ENCODE measurements at regions of chr3 and their contacts with region 1.

Region 1: DNA sequence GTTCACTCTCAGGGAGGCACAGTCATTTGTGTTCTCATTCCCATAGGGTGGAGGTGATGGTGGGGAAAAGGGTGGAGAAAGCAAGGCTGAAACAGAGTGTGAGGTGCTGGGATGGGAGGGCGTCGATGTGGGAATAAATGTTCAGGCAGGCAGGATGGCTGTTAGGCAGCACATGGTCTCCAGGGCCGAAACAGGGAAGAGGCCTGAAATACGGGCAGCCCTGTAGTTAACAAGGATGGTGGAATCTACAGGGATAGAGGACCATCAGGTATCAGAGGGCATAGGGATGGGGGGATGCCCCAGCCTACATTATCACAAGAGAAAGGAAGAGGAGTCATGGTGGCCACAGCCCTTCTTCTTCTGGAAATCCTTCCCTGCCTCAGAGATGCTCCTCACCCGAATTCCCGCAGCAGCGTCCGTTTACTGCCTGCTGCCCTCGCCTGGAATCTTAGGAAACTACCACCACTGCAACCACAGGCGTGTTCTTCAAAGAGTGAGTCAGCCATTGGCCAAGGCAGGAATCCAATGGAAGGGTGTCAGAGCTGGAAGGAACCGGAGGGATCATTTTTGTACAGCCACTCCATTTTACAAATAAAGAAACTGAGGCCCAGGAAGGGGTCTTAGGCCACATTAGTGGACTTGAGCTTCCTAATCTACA is 49.7 kb upstream of the POMGNT2 start:
- DNase-seq: peak; percentile 75
- ATAC-seq: peak; percentile 81

Region 2: DNA sequence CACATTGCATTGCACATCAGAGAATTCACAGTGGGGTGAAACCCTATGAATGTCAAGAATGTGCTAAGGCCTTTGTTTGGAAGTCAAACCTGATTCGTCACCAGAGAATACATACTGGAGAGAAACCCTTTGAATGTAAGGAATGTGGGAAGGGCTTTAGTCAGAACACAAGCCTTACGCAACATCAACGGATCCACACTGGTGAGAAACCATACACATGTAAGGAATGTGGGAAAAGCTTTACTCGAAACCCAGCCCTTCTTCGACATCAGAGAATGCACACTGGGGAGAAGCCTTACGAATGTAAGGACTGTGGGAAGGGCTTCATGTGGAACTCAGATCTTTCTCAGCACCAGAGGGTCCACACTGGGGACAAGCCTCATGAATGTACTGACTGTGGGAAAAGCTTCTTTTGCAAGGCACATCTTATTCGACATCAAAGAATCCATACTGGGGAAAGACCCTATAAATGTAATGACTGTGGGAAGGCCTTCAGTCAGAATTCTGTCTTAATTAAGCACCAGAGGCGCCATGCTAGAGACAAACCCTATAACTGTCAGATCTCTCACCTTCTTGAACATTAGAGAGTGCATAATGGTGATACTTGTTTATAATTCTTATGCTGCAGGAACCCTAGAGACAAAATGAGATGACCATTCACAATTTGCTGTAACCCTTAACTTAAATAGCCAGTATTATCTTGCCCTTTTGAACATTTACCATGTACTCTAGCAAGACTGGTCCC is 240.7 kb before region 1 on chr3:
- intact Hi-C with region 1: no loop called
- DNase-seq: no peak
- ATAC-seq: no peak

Region 3: DNA sequence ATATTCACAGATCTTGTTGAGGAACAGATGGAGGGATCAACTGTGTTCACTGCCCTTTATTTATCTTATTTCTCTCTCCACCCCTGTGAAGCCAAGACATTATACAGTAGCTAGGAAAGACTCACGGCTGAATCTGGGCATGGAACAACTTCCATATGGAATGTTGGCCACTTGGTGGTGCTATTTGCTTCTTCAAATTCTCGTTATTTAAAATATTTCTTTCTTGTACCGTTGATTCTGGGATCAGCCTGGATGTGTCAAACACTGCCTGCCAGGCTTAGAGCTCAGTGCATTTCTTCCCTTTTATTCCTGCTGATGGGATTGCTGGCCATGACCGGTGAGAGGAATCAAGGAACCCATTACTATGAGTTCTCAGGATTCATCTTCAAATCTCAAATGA is 194.0 kb before region 1 on chr3:
- intact Hi-C with region 1: loop called (anchors 1 kb)
- DNase-seq: no peak
- ATAC-seq: peak; percentile 71